Mucosa of descending colon (tissue), 3 donors: ENCODE measurements at regions of chr9 and their contacts with region 1.

Region 1: GRCh38 chr9:90142580-90142979 is 500.0 kb downstream of the DIRAS2 start:
- DNase-seq: peak in 1 of 3 donors; percentile 90
- ATAC-seq: peak; percentile 63
- H3K4me3 ChIP-seq: no peak overlapping the region
- H3K4me1 ChIP-seq: no peaks in the 10 kb centered on the region
- CTCF ChIP-seq: no peak

Region 2: GRCh38 chr9:90219548-90220118 is 77.1 kb after region 1 on chr9:
- intact Hi-C with region 1: loop called in 1 of 2 experiments (anchors 5 kb)
- DNase-seq: peak in 2 of 3 donors; percentile 71 to 73
- ATAC-seq: peak; percentile 69
- H3K4me3 ChIP-seq: no peak overlapping the region
- H3K4me1 ChIP-seq: peaks cover 6% of the 10 kb centered on the region
- CTCF ChIP-seq: peak; percentile 32

Region 3: DNA sequence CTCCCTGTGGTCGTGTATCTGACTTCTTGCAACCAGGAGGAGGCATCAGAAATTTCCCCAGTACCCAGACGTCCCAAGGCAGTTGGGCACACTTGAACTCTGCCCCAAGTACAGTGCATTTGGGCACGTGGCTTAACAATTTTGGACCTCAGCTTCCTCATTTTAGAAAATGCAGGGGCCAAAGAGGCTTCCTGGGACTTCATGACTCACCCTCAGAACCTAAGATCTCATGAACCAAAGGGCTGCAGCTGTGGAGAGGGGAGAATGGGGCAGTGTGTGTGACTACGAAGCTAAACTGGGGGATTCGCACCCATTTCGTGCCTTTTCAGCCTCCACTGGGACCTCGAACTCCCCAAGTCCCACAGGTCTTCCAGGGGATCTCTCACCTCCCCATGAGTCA is 718.2 kb after region 1 on chr9:
- intact Hi-C with region 1: loop called in 1 of 2 experiments (anchors 10 kb)
- DNase-seq: peak in 1 of 3 donors; percentile 13
- ATAC-seq: peak; percentile 9
- H3K4me3 ChIP-seq: no peak overlapping the region
- H3K4me1 ChIP-seq: no peaks in the 10 kb centered on the region
- CTCF ChIP-seq: no peak